CD4-positive, alpha-beta T cell (primary cell): ENCODE measurements at regions of chr16 and their contacts with region 1.

Region 1: GRCh38 chr16:81035398-81035974 is at the start of gene ATMIN:
- DNase-seq: peak; percentile 78 to 96 (median 88)
- ATAC-seq: peak; percentile 94
- H3K4me3 ChIP-seq: peak within 1 kb of the TSS; percentile 57
- H3K4me3 Mint-ChIP-seq: peak within 1 kb of the TSS; percentile 90
- H3K27ac ChIP-seq: no peak within 1 kb of the TSS
- H3K27ac Mint-ChIP-seq: peak within 1 kb of the TSS; percentile 73
- H3K4me1 ChIP-seq: peaks cover 30% of the 10 kb centered on the region
- H3K4me1 Mint-ChIP-seq: peaks cover 40% of the 10 kb centered on the region
- H3K27me3 ChIP-seq: no peaks in the 10 kb centered on the region
- H3K27me3 Mint-ChIP-seq: no peaks in the 10 kb centered on the region
- CTCF ChIP-seq: peak; percentile 84
- total RNA-seq, gene ATMIN: 29.9 to 31.7 TPM

Region 2: GRCh38 chr16:80554033-80554432 is 481.5 kb before region 1 on chr16:
- CTCF ChIA-PET with region 1: no interaction called
- POLR2A ChIA-PET with region 1: no interaction called
- intact Hi-C with region 1: no loop called
- DNase-seq: no peak
- ATAC-seq: no peak
- H3K4me3 ChIP-seq: no peak overlapping the region
- H3K4me3 Mint-ChIP-seq: no peak overlapping the region
- H3K27ac ChIP-seq: no peak overlapping the region
- H3K27ac Mint-ChIP-seq: no peak overlapping the region
- H3K4me1 ChIP-seq: no peaks in the 10 kb centered on the region
- H3K4me1 Mint-ChIP-seq: peaks cover 10% of the 10 kb centered on the region
- H3K27me3 ChIP-seq: no peaks in the 10 kb centered on the region
- H3K27me3 Mint-ChIP-seq: no peaks in the 10 kb centered on the region
- CTCF ChIP-seq: no peak

Region 3: DNA sequence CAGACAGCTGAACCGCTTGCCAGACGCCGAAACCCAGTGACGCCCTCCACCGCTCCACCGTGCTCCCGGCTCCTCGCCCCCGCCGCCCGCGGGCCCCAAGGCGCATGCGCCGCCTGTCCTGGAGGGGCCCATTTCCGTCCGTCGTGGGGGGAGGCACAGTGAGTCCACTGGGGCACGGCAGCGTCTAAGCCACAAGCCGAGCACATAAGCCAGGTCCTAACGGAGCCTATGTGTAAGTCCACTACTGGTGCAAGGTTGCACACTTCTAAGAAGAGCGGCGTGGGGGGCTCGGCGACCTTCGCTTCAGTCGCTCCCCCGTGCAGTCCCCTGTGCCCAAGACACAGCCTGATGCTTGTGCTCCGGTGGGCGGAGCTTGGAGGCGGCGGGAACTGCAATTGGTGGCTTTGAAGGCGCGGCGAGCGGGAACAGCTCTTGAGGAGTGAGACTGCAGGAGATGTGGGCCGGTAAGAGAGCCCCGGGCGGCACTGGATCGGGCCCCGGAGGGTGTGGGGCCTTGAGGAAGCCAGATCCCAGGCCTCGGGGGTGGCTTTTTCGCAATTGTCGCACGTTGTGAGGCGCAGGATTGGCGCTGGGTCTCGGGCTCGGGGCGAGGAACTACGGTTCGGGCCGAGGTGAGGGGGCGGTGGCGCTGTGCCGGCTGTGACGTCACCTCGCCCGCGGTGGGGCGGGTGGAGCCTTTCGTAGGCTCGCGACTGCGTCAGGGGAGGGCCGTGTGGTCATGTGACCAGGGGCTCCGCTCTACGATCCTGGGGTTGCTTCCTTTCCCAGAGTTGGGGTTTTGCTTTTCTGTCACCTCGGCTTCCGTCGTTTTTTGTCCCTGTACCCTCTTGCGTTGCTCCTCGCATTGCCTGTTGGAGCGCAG is 28.4 kb before region 1 on chr16 and contains the starts of genes CENPN and CMC2:
- CTCF ChIA-PET with region 1: interaction called, 80 read pairs
- POLR2A ChIA-PET with region 1: interaction called, 38 read pairs
- intact Hi-C with region 1: loop called (anchors 1 kb)
- DNase-seq: peak; percentile 96 to 99 (median 98)
- ATAC-seq: peak; percentile 77
- H3K4me3 ChIP-seq: peak within 1 kb of the TSS; percentile 79
- H3K4me3 Mint-ChIP-seq: peak within 1 kb of the TSS; percentile 90
- H3K27ac ChIP-seq: peak within 1 kb of the TSS; percentile 94 to 99
- H3K27ac Mint-ChIP-seq: peak within 1 kb of the TSS; percentile 99
- H3K4me1 ChIP-seq: peaks cover 39% of the 10 kb centered on the region
- H3K4me1 Mint-ChIP-seq: peaks cover 46% of the 10 kb centered on the region
- H3K27me3 ChIP-seq: no peaks in the 10 kb centered on the region
- H3K27me3 Mint-ChIP-seq: no peaks in the 10 kb centered on the region
- CTCF ChIP-seq: no peak
- total RNA-seq, gene CENPN: 8.7 to 9.7 TPM
- total RNA-seq, gene CMC2: 67.7 to 68.8 TPM

Region 4: GRCh38 chr16:81077076-81077940 is 41.8 kb after region 1 on chr16 and contains the start of gene C16orf46:
- CTCF ChIA-PET with region 1: interaction called, 34 read pairs
- POLR2A ChIA-PET with region 1: interaction called, 51 read pairs
- intact Hi-C with region 1: loop called (anchors 1 to 2 kb)
- DNase-seq: peak; percentile 93 to 99 (median 96)
- ATAC-seq: peak; percentile 68
- H3K4me3 ChIP-seq: peak within 1 kb of the TSS; percentile 90
- H3K4me3 Mint-ChIP-seq: no peak within 1 kb of the TSS
- H3K27ac ChIP-seq: peak within 1 kb of the TSS; percentile 95 to 97
- H3K27ac Mint-ChIP-seq: no peak within 1 kb of the TSS
- H3K4me1 ChIP-seq: peaks cover 15% of the 10 kb centered on the region
- H3K4me1 Mint-ChIP-seq: no peaks in the 10 kb centered on the region
- H3K27me3 ChIP-seq: no peaks in the 10 kb centered on the region
- H3K27me3 Mint-ChIP-seq: no peaks in the 10 kb centered on the region
- CTCF ChIP-seq: no peak
- total RNA-seq, gene C16orf46: 0.55 TPM in 1 of 2 experiments, not detected in the other

Region 5: DNA sequence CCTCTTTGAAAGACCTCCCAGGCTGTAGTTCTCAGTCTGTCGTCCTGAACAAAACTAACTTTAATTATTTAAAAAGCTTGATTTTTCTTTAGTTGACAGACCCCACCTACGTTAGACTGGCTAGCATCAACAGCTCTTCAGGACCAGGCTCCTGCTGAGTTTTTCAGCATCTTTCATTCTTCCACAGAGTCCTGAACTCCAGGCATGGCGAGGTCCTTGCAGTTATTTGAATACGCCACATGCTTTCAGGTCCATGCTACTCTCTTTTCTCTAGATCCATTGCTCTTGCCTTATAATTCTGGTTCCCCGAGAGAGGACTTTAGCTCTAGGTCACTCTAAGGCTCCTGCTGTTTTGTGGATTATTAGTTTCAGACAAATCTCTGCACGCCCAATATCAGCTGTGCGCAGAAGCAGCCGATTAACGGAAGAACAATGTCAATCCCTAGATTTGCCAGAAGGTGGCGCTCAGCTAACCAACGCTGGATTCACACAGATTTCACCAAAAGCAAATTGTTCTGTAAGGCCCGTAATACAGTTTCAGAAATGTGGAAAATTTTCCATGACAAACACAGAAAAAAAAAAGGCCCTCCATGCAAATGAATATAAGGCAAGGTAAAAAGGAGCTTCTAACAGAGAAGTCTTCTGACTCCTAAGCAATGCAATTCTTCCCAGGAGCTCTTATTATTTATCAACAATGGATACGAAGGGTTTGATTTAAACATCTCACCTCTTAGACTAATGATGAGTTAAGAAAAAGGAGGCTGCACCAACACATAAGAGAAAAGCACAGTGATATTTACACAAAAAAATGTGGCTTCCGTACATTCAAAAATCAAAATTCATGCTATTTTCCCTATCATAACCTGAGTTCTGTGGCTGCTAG is 169.6 kb after region 1 on chr16:
- CTCF ChIA-PET with region 1: no interaction called
- POLR2A ChIA-PET with region 1: no interaction called
- intact Hi-C with region 1: loop called in 1 of 2 experiments (anchors 10 kb)
- DNase-seq: peak; percentile 5 to 70 (median 22)
- ATAC-seq: no peak
- H3K4me3 ChIP-seq: no peak overlapping the region
- H3K4me3 Mint-ChIP-seq: no peak overlapping the region
- H3K27ac ChIP-seq: no peak overlapping the region
- H3K27ac Mint-ChIP-seq: no peak overlapping the region
- H3K4me1 ChIP-seq: no peaks in the 10 kb centered on the region
- H3K4me1 Mint-ChIP-seq: no peaks in the 10 kb centered on the region
- H3K27me3 ChIP-seq: peaks cover 0 to 3% of the 10 kb centered on the region in 2 experiments
- H3K27me3 Mint-ChIP-seq: peaks cover 32% of the 10 kb centered on the region
- CTCF ChIP-seq: peak; percentile 95

Region 6: GRCh38 chr16:81737885-81738786 is 702.6 kb after region 1 on chr16:
- CTCF ChIA-PET with region 1: no interaction called
- POLR2A ChIA-PET with region 1: interaction called, 4 read pairs
- intact Hi-C with region 1: loop called in 1 of 2 experiments (anchors 5 kb)
- DNase-seq: peak; percentile 78 to 93 (median 85)
- ATAC-seq: peak; percentile 98
- H3K4me3 ChIP-seq: peak overlapping the region; percentile 29
- H3K4me3 Mint-ChIP-seq: peak overlapping the region; percentile 72
- H3K27ac ChIP-seq: no peak overlapping the region
- H3K27ac Mint-ChIP-seq: peak overlapping the region; percentile 47
- H3K4me1 ChIP-seq: peaks cover 24% of the 10 kb centered on the region
- H3K4me1 Mint-ChIP-seq: peaks cover 8% of the 10 kb centered on the region
- H3K27me3 ChIP-seq: no peaks in the 10 kb centered on the region
- H3K27me3 Mint-ChIP-seq: no peaks in the 10 kb centered on the region
- CTCF ChIP-seq: peak; percentile 91